Activated CD4-positive, alpha-beta memory T cell treated with anti-CD3 and anti-CD28 coated beads for 36 hours (primary cell): ENCODE measurements at regions of chr16 and their contacts with region 1.

Region 1: DNA sequence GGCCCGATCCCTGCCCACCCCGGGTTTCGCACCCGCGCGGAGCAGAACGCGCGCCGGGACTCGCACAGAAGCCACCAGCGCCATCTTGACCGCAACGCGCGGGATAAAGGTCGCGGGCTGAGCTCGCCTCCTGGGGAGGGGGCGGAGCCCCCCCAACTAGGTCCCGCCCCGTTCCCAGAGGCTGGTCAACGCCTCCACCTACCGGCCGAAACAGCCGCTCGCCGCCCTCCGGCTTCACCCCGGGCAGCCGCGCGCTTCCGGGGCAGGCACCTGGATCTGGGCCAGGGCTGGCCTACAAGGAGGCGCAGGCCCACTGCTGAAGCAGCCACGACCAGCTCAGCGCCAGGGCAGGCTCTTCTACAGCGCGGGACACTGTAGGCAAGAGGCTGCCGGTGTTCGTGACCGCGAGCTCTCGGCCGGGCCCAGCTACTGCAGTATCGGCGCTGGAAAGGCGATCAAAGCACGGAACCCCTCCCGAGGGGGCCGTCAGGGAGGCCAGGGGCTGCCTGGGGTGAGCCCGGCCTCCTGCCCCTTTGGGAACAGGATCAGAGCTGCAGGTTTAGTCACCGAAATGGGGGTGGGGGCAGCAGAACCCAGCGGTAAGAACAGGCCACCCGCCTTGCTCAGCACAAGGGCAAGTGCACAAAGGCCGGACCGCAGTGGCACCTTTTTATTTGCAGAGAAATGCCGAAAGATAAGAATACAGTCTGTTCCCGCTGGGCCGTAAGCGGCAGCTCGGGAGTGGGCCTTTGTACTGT is at the start of gene ECI1:
- DNase-seq: peak; percentile 92
- H3K4me3 Mint-ChIP-seq: peak within 1 kb of the TSS; percentile 88
- H3K27ac Mint-ChIP-seq: peak within 1 kb of the TSS; percentile 89
- H3K4me1 Mint-ChIP-seq: peaks cover 10% of the 10 kb centered on the region
- H3K27me3 Mint-ChIP-seq: no peaks in the 10 kb centered on the region
- total RNA-seq, gene ECI1: 50.7 to 52.5 TPM

Region 2: DNA sequence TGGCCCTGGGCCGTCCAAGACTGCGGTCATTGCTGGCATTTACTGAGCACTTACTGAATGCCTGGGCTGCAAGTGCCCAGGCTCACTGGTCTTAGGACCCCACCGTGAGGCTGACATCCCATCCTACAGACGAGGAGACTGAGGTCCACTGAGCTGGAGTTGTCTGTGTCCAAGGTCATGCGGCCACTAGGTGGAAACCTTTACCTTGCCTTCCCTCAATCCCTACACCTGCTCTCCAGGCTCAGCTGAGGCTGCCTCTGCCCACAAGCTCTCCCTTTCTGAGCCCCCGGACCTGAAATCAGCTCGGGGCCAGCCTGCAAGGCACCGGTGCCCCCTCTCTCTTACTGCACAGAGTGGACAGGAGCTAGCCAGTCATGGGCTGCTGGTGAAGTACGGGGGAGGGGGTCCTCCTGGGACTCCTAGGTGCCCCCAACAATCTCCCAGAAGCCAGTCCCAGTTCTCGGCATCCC is 56.8 kb before region 1 on chr16:
- CTCF ChIA-PET with region 1: interaction called, 31 read pairs
- POLR2A ChIA-PET with region 1: interaction called, 4 read pairs
- intact Hi-C with region 1: no loop called
- DNase-seq: peak; percentile 67
- H3K4me3 Mint-ChIP-seq: no peak overlapping the region
- H3K27ac Mint-ChIP-seq: no peak overlapping the region
- H3K4me1 Mint-ChIP-seq: peaks cover 4% of the 10 kb centered on the region
- H3K27me3 Mint-ChIP-seq: peaks cover 28% of the 10 kb centered on the region

Region 3: DNA sequence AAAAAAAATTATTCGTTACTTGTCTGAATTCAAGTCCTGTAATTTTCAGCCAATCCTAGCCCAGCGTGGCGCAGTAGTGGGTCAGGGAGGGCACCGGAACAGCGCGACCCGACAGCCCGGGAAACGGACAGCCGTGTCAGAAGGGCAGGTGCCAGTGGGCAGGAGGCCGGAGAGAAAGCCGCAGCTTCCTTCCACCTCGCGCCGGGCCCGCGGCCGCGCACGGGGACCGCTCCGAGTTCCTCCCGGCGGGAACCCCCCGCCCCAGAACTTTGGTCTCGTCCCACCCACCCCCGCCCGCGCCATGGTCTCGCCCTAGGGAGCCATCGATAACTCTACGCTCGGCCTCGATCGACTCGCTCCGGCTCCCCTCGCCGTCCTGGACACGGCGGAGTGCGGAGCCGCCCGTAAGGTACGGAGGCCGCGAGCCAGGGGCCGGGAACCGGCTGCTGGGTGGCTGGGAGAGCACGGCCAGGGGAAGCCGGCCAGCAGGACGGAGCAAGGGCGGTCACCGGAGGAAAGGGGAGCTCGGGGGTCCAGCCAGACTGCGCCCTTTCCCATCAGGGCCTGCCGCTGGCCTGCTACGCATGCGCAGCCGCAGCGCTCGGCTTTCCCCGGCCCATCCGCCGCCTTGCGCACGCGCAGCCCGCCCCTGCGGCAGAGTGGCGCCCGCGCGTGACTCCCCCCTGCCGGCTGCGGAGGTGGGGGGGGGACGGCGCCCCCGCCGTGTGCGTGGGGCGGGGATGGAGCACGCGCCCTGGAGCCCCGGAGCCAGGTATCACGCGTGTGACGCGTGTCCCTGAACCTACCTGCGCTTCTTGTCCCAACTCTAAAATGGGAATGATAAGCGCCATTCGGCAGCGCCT is 46.3 kb before region 1 on chr16 and contains the start of gene MLST8:
- CTCF ChIA-PET with region 1: interaction called, 4 read pairs
- POLR2A ChIA-PET with region 1: interaction called, 6 read pairs
- intact Hi-C with region 1: loop called (anchors 5 kb)
- DNase-seq: peak; percentile 89
- H3K4me3 Mint-ChIP-seq: peak within 1 kb of the TSS; percentile 84
- H3K27ac Mint-ChIP-seq: peak within 1 kb of the TSS; percentile 79
- H3K4me1 Mint-ChIP-seq: peaks cover 26% of the 10 kb centered on the region
- H3K27me3 Mint-ChIP-seq: no peaks in the 10 kb centered on the region
- total RNA-seq, gene MLST8: 49.7 to 50.4 TPM

Region 4: GRCh38 chr16:2223375-2224182 is 28.1 kb before region 1 on chr16 and contains the start of gene E4F1:
- CTCF ChIA-PET with region 1: interaction called, 3 read pairs
- POLR2A ChIA-PET with region 1: interaction called, 3 read pairs
- intact Hi-C with region 1: loop called (anchors 2 kb)
- DNase-seq: peak; percentile 100
- H3K4me3 Mint-ChIP-seq: peak within 1 kb of the TSS; percentile 81
- H3K27ac Mint-ChIP-seq: peak within 1 kb of the TSS; percentile 45
- H3K4me1 Mint-ChIP-seq: peaks cover 16% of the 10 kb centered on the region
- H3K27me3 Mint-ChIP-seq: no peaks in the 10 kb centered on the region
- total RNA-seq, gene E4F1: 19.3 to 19.6 TPM

Region 5: GRCh38 chr16:2233872-2234812 is 17.5 kb before region 1 on chr16:
- CTCF ChIA-PET with region 1: no interaction called
- POLR2A ChIA-PET with region 1: no interaction called
- intact Hi-C with region 1: no loop called
- DNase-seq: no peak
- H3K4me3 Mint-ChIP-seq: no peak overlapping the region
- H3K27ac Mint-ChIP-seq: no peak overlapping the region
- H3K4me1 Mint-ChIP-seq: no peaks in the 10 kb centered on the region
- H3K27me3 Mint-ChIP-seq: peaks cover 2% of the 10 kb centered on the region

Region 6: DNA sequence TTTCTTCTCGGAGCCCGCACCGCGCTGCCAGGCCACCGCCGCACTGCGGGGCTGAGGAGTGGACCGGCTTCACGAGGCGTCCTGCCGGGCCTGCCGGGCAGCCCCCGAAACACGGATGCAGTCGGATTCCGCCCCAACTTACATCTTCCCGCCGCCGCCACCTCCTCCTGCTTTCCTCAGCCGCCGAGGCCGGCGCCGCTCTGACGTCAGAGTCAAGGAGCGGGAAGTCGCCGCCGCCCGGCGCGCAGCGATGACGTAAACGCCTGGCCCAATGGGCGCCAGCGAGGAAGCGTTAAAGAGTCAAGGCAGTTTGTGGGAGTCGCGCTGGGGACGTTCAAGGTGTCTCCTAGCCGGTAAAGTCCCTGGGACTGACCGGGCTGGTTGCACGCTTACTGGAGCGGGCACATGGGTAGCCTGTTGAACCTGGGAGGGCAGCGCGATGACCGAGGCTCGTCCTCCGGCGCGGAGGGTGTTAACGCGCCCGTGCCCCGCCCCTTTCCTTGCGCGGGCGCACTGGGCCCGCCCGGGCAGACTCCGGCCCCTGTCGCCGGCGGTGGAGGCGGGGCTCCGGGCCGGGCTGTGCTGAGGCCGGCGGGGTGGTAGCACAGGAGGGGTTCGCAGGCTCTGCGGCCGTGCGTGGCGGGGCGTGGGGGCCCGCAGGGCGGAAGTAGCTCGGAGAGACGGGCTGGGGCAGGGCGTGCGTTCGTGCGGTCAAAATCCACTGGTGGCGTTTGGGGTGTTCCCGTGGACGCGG is 16.4 kb after region 1 on chr16 and contains the start of gene RNPS1:
- CTCF ChIA-PET with region 1: interaction called, 5 read pairs
- POLR2A ChIA-PET with region 1: interaction called, 13 read pairs
- intact Hi-C with region 1: loop called (anchors 2 kb)
- DNase-seq: peak; percentile 97
- H3K4me3 Mint-ChIP-seq: peak within 1 kb of the TSS; percentile 88
- H3K27ac Mint-ChIP-seq: peak within 1 kb of the TSS; percentile 97
- H3K4me1 Mint-ChIP-seq: peaks cover 35% of the 10 kb centered on the region
- H3K27me3 Mint-ChIP-seq: no peaks in the 10 kb centered on the region
- total RNA-seq, gene RNPS1: 292 to 294 TPM